ENCODE measurements at regions of chr14 and their contacts with region 1.

Region 1: DNA sequence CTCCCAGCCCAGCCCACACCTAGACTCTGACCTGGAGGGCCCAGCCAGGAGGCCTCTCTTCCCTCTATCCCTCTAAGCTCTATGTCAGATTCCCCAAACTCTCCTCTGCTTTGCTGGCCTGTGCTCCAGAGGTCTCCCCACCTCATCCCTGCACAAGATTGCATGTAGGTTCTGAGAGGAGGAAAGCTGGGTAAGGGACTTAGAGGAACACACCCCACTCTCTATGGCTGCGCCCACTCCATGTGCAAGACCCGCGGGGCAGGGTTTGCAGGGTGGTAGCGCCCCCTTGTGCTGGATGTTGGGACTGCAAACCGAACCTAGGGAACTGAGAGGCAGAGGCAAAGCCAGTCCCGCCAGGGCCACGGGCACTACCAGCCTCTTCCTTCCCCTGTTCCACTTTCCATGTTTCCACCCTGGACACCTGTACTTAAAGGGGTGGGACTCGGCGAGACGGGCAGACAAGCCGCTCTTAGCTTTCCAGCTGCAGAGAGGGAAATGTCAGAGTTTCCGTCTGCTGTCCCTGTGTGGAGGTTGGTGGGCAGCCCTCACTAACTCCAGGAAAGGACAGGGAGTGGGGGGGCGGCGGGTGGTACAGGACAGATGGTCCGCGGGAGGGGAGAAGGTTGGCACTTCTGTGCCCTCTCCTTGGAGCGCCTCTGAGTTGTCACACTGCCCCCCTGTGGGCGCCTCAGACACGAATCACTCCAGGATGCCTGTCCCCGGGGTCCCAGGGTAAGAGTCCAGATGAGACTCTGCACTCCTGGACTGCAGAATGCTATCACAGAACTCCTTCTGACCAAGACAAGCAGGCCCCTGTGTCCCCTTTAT is 16.8 kb downstream of the MMP14 start:
- DNase-seq: peak; percentile 96
- ATAC-seq: peak; percentile 82
- H3K4me3 Mint-ChIP-seq: peak overlapping the region; percentile 71
- H3K27ac Mint-ChIP-seq: peak overlapping the region; percentile 79
- H3K4me1 Mint-ChIP-seq: peaks cover 15% of the 10 kb centered on the region
- H3K27me3 Mint-ChIP-seq: peaks cover 13% of the 10 kb centered on the region
- CTCF ChIP-seq: peak; percentile 92

Region 2: GRCh38 chr14:22766456-22767322 is 86.5 kb before region 1 on chr14 and contains the start of gene OXA1L:
- CTCF ChIA-PET with region 1: interaction called, 11 read pairs
- POLR2A ChIA-PET with region 1: interaction called, 7 read pairs
- intact Hi-C with region 1: no loop called
- DNase-seq: peak; percentile 97
- ATAC-seq: peak; percentile 90
- H3K4me3 Mint-ChIP-seq: peak within 1 kb of the TSS; percentile 85
- H3K27ac Mint-ChIP-seq: peak within 1 kb of the TSS; percentile 98
- H3K4me1 Mint-ChIP-seq: peaks cover 26% of the 10 kb centered on the region
- H3K27me3 Mint-ChIP-seq: no peaks in the 10 kb centered on the region
- CTCF ChIP-seq: no peak
- total RNA-seq, gene OXA1L: 134 to 140 TPM

Region 3: GRCh38 chr14:22829661-22830442 is 23.3 kb before region 1 on chr14 and contains the start of gene MRPL52:
- CTCF ChIA-PET with region 1: interaction called, 469 read pairs
- POLR2A ChIA-PET with region 1: interaction called, 9 read pairs
- intact Hi-C with region 1: no loop called
- DNase-seq: peak; percentile 94
- ATAC-seq: peak; percentile 93
- H3K4me3 Mint-ChIP-seq: peak within 1 kb of the TSS; percentile 88
- H3K27ac Mint-ChIP-seq: peak within 1 kb of the TSS; percentile 98
- H3K4me1 Mint-ChIP-seq: peaks cover 22% of the 10 kb centered on the region
- H3K27me3 Mint-ChIP-seq: peaks cover 2% of the 10 kb centered on the region
- CTCF ChIP-seq: no peak
- total RNA-seq, gene MRPL52: 122 to 126 TPM

Region 4: GRCh38 chr14:22886500-22887259 is 33.5 kb after region 1 on chr14:
- CTCF ChIA-PET with region 1: interaction called, 11 read pairs
- POLR2A ChIA-PET with region 1: interaction called, 3 read pairs
- intact Hi-C with region 1: no loop called
- DNase-seq: peak; percentile 81
- ATAC-seq: peak; percentile 71
- H3K4me3 Mint-ChIP-seq: peak overlapping the region; percentile 70
- H3K27ac Mint-ChIP-seq: peak overlapping the region; percentile 77
- H3K4me1 Mint-ChIP-seq: peaks cover 38% of the 10 kb centered on the region
- H3K27me3 Mint-ChIP-seq: peaks cover 1% of the 10 kb centered on the region
- CTCF ChIP-seq: peak; percentile 35

Region 5: DNA sequence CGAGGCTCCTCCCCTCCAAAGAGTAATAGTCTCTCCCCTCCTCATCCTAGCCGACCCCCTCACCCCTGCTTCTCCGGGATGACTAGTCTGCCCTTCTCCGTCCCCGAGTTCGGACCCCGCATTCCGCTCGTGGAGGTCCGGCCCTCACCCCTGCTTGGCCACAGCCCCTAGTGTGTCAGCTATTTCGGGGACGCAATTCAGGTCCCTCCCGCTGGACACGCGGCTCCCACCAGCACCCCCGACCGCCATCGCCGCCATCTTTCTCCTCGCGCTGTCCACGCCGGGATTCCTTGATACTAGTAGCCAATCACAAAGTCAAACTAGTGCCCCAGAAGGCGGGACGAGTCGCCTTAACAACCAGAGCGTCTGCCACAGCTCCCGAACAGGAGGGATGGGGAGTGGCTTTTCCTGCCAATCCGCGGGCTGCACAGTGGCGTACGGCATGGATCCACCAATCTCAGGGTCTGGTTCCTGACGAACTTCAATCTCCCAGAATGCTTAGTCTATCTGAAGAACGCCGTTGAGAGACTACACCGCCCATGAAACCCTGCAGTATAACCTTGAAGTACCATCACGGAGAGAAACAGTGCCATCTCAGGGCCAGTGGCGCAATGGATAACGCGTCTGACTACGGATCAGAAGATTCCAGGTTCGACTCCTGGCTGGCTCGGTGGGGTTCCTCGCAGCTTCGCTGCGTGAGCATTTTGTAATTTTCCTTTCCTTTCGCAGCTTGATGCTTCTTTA is 76.1 kb after region 1 on chr14 and contains the start of gene PRMT5:
- CTCF ChIA-PET with region 1: no interaction called
- POLR2A ChIA-PET with region 1: no interaction called
- intact Hi-C with region 1: no loop called
- DNase-seq: peak; percentile 99
- ATAC-seq: peak; percentile 96
- H3K4me3 Mint-ChIP-seq: no peak within 1 kb of the TSS
- H3K27ac Mint-ChIP-seq: no peak within 1 kb of the TSS
- H3K4me1 Mint-ChIP-seq: peaks cover 31% of the 10 kb centered on the region
- H3K27me3 Mint-ChIP-seq: no peaks in the 10 kb centered on the region
- CTCF ChIP-seq: no peak
- total RNA-seq, gene PRMT5: 107 to 116 TPM